ENCODE measurements at regions of chr17 and their contacts with region 1.

Region 1: DNA sequence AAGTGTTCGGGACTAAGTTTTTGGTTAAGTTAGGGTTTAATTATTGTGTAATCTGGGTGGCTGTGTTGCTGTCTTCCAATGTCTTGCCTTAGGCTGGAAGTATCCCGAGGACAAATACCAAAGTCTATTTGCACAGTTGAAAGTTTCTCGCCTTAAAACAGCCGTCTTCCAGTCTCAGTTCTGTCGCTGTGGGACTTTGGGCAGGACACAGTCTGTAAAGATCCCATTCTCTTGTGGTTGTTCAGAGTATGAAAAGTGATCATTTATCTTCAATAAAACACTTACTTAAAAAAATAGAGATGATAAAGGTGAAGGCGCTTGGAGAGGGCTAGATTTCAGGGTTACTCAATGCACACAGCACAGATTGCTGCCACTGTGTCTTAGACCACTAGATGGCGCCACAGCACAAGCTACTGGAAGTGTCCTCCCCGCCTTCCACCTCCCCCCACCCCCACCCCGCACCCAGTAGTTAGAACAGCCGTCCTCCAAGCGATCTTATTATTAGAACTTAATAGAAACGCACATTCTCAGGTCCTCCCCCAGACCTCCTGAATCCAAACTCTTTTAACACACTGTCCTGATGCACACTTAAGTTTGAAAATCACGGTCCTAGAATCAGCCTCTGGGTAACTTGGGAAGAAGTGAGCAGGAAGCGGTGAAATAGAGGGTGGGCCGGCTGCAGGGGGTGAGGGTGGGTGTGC is 45.9 kb downstream of the AKAP1 start:
- DNase-seq: peak; percentile 57
- H3K4me3 ChIP-seq: peak overlapping the region in 1 of 3 experiments; percentile 37
- H3K27ac ChIP-seq: no peak overlapping the region
- H3K4me1 ChIP-seq: peaks cover 4% of the 10 kb centered on the region
- H3K27me3 ChIP-seq: no peaks in the 10 kb centered on the region
- CTCF ChIP-seq: peak; percentile 77 to 83

Region 2: DNA sequence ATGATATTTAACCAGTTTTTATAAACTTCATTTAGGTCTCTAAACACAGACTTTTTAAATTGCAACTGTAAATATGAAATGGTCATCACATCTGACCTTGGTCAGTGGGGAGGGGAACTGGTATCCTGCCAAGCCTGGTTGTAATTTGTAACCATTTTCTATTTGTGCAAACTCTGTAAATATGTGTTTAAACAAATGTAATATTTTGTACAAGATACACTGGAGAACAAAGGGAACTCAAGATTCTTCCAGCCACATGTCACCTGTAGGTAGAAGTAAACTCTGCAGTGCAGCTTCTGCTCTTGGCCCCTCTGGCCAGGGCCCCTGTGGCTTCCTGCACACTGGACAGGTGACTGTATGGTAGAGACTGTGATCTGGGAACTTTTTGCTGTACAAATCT is 10.1 kb before region 1 on chr17:
- CTCF ChIA-PET with region 1: no interaction called
- dilution Hi-C with region 1: no loop called
- in situ Hi-C with region 1: no loop called
- intact Hi-C with region 1: no loop called
- DNase-seq: no peak
- H3K4me3 ChIP-seq: no peak overlapping the region
- H3K27ac ChIP-seq: no peak overlapping the region
- H3K4me1 ChIP-seq: no peaks in the 10 kb centered on the region
- H3K27me3 ChIP-seq: no peaks in the 10 kb centered on the region
- CTCF ChIP-seq: no peak

Region 3: GRCh38 chr17:57158296-57158695 is 27.4 kb after region 1 on chr17:
- CTCF ChIA-PET with region 1: no interaction called
- dilution Hi-C with region 1: no loop called
- in situ Hi-C with region 1: no loop called
- intact Hi-C with region 1: no loop called
- DNase-seq: peak; percentile 26
- H3K4me3 ChIP-seq: no peak overlapping the region
- H3K27ac ChIP-seq: no peak overlapping the region
- H3K4me1 ChIP-seq: peaks cover 2% of the 10 kb centered on the region
- H3K27me3 ChIP-seq: no peaks in the 10 kb centered on the region
- CTCF ChIP-seq: no peak

Region 4: GRCh38 chr17:57186226-57187019 is 55.5 kb after region 1 on chr17:
- CTCF ChIA-PET with region 1: no interaction called
- dilution Hi-C with region 1: no loop called
- in situ Hi-C with region 1: no loop called
- intact Hi-C with region 1: no loop called
- DNase-seq: no peak
- H3K4me3 ChIP-seq: no peak overlapping the region
- H3K27ac ChIP-seq: no peak overlapping the region
- H3K4me1 ChIP-seq: no peaks in the 10 kb centered on the region
- H3K27me3 ChIP-seq: no peaks in the 10 kb centered on the region
- CTCF ChIP-seq: no peak

Region 5: GRCh38 chr17:57243171-57243948 is 112.4 kb after region 1 on chr17:
- CTCF ChIA-PET with region 1: interaction called, 3 read pairs
- dilution Hi-C with region 1: no loop called
- in situ Hi-C with region 1: no loop called
- intact Hi-C with region 1: loop called (anchors 1 kb)
- DNase-seq: peak; percentile 45
- H3K4me3 ChIP-seq: no peak overlapping the region
- H3K27ac ChIP-seq: no peak overlapping the region
- H3K4me1 ChIP-seq: no peaks in the 10 kb centered on the region
- H3K27me3 ChIP-seq: no peaks in the 10 kb centered on the region
- CTCF ChIP-seq: peak; percentile 100

Region 6: GRCh38 chr17:57597531-57598453 is 466.9 kb after region 1 on chr17:
- CTCF ChIA-PET with region 1: no interaction called
- dilution Hi-C with region 1: no loop called
- in situ Hi-C with region 1: no loop called
- intact Hi-C with region 1: loop called (anchors 2 kb)
- DNase-seq: peak; percentile 49
- H3K4me3 ChIP-seq: no peak overlapping the region
- H3K27ac ChIP-seq: no peak overlapping the region
- H3K4me1 ChIP-seq: peaks cover 2% of the 10 kb centered on the region
- H3K27me3 ChIP-seq: no peaks in the 10 kb centered on the region
- CTCF ChIP-seq: peak; percentile 83 to 85

Region 7: DNA sequence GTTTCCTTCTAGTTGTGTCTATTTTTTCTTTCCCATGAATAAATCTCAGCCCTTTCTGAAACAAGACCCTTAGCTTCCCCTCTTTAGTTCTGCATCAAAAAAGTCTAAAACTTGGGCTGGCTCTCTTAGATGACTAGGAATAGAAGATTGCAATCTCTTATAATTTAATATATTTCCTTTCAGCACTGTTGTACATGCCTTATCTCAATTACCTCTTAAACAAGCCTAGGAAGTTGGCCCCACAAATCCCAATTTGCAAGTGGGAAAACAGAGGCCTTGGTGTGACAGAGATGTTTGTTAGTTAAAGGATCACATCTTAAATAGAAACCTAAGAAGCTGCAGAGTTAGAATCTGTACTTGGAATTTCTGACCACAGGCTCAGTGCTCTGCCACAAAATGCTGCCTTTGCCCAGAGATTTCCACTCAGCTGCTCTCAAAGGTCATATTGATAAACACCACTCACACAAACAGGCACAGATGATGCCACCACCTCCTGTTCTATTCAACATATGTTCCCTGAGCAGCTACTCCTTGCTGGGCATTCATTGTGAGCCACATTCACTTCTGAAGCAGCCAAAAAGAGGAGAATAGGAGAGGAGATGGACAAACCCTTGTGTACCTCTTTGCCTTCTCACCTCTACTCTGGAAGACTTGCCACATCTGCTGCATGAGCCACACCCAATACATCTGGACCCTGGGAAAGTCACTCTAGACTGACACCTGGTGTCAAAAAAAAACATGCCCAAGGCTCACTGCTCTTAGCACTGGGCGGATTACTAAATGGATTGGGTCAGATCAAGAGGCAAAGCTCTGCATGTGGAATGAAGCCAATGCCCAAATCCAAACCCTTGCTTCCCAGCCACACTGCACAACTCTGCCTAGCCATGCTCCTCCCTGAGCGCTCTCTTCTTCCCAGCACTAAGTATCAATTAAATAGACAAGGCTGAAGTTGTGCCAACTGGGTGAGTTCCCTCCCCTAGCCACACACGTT is 608.8 kb after region 1 on chr17:
- CTCF ChIA-PET with region 1: no interaction called
- dilution Hi-C with region 1: no loop called
- in situ Hi-C with region 1: loop called in 1 of 2 experiments (anchors 5 kb)
- intact Hi-C with region 1: loop called (anchors 1 kb)
- DNase-seq: peak; percentile 46
- H3K4me3 ChIP-seq: no peak overlapping the region
- H3K27ac ChIP-seq: no peak overlapping the region
- H3K4me1 ChIP-seq: no peaks in the 10 kb centered on the region
- H3K27me3 ChIP-seq: no peaks in the 10 kb centered on the region
- CTCF ChIP-seq: peak; percentile 49 to 70

Region 8: GRCh38 chr17:57833179-57833939 is 702.4 kb after region 1 on chr17:
- CTCF ChIA-PET with region 1: no interaction called
- dilution Hi-C with region 1: no loop called
- in situ Hi-C with region 1: loop called in 1 of 2 experiments (anchors 25 kb)
- intact Hi-C with region 1: loop called (anchors 1 kb)
- DNase-seq: peak; percentile 41
- H3K4me3 ChIP-seq: peak overlapping the region in 1 of 3 experiments; percentile 25
- H3K27ac ChIP-seq: no peak overlapping the region
- H3K4me1 ChIP-seq: peaks cover 4% of the 10 kb centered on the region
- H3K27me3 ChIP-seq: no peaks in the 10 kb centered on the region
- CTCF ChIP-seq: peak; percentile 90 to 97

Region 9: DNA sequence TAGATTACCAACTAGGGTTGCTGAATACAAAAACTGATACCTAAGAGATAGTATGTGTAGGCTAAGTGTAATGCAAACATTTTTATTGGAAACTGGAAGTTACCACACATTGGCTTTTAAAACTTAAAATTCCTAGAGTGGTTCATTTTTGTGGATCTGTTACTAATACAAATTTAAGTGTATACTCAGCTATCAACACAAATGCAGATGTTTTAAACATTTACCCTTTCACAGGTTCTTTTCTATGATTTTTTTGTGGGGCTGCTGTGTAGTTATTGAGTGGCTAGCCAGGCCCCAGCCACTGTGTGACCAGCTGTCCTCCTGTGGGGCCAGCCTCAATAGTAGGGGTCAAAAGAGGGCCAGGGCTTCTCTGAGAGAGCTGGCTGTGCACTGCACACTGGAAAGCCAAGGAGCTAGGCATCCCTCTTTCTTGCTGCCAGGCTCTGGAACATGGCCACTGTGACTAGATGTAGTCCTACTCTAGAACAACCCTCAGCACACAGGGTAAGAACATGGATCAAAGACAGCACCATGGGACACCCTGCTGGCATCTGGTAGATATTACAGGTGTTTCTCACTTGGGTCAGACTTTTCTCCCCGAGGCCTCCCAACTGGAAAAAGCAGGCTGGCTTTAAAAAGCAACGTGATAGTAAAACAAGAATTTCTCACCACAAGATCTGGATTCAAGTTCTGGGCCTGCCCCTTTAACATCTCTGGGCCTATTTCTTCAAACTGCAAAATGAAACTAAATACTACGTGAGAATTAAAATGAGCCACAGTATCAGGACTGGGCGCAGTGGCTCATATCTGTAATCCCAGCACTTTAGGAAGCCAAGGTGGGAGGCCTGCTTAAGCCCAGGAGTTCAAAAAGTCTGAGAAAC is 864.4 kb after region 1 on chr17:
- CTCF ChIA-PET with region 1: no interaction called
- dilution Hi-C with region 1: no loop called
- in situ Hi-C with region 1: no loop called
- intact Hi-C with region 1: loop called (anchors 5 kb)
- DNase-seq: peak; percentile 61
- H3K4me3 ChIP-seq: no peak overlapping the region
- H3K27ac ChIP-seq: no peak overlapping the region
- H3K4me1 ChIP-seq: no peaks in the 10 kb centered on the region
- H3K27me3 ChIP-seq: no peaks in the 10 kb centered on the region
- CTCF ChIP-seq: peak; percentile 69 to 81

Region 10: GRCh38 chr17:58172369-58173071 is 1041.6 kb after region 1 on chr17:
- CTCF ChIA-PET with region 1: no interaction called
- dilution Hi-C with region 1: no loop called
- in situ Hi-C with region 1: no loop called
- intact Hi-C with region 1: loop called (anchors 2 kb)
- DNase-seq: peak; percentile 35
- H3K4me3 ChIP-seq: no peak overlapping the region
- H3K27ac ChIP-seq: no peak overlapping the region
- H3K4me1 ChIP-seq: no peaks in the 10 kb centered on the region
- H3K27me3 ChIP-seq: no peaks in the 10 kb centered on the region
- CTCF ChIP-seq: peak; percentile 57 to 68